ENCODE measurements at regions of chr1 and their contacts with region 1.

Region 1: DNA sequence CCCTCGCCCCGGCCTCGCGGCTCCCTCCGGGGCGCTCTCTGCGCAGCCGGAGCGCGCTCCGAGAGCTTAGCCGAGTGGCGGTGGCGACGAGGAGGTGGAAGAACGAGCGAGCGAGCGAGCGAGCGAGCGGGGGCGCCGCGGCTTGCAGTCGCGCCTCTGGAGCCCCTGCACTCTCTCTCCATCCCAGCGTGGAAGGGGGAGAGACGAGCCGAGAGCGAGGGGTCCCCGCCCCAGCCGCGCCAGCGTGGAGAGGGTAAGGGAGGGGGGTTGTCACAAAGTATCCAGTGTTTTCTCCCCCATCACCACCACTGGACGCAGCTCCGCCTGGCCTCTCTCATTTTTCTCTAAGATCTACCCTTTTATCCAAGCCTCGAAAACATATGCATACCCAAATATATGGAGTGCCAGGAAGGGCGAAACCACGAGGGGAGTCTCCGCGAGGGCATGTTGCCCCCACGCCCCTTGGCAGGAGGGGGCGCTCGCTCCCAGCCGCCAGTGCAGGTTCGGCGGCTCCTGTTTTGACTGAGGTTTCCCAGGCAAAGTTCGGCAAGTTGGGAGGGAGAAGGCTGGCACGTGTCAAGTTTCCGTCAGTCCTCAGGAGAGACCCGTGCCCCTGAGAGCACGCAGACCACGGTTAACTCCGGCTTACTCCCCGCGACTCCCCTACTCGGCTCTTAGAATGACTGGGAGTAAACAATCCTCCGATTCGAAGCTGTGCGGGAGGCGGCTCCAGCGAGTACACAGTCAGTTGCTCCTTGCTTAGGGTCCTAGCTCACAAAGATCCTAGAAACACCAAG is 569 bp upstream of the DAB1 start:
- DNase-seq: peak; percentile 28 to 73 (median 50)
- ATAC-seq: peak; percentile 33 to 78 (median 72)
- H3K4me3 ChIP-seq: peak overlapping the region; percentile 26 to 60 (median 53)
- H3K27ac ChIP-seq: peak overlapping the region in 7 of 12 donors; percentile 11 to 57 (median 45)
- H3K4me1 ChIP-seq: peaks cover 0 to 28% (median 1%) of the 10 kb centered on the region in 12 donors
- H3K27me3 ChIP-seq: peaks cover 0 to 57% (median 14%) of the 10 kb centered on the region in 9 donors
- CTCF ChIP-seq: peak; percentile 37 to 79 (median 64)
- POLR2A ChIP-seq: no peak

Region 2: GRCh38 chr1:57623039-57623790 is 198.8 kb after region 1 on chr1:
- intact Hi-C with region 1: loop called in 1 of 10 experiments (anchors 10 kb)
- DNase-seq: peak; percentile 41 to 84 (median 65)
- ATAC-seq: peak in 1 of 4 donors; percentile 95
- H3K4me3 ChIP-seq: no peak overlapping the region
- H3K27ac ChIP-seq: peak overlapping the region in 2 of 12 donors; percentile 28 to 51
- H3K4me1 ChIP-seq: peaks cover 0 to 18% (median 0%) of the 10 kb centered on the region in 12 donors
- H3K27me3 ChIP-seq: no peaks in the 10 kb centered on the region
- CTCF ChIP-seq: peak in 1 of 12 donors; percentile 20
- POLR2A ChIP-seq: no peak

Region 3: GRCh38 chr1:58047265-58047858 is 622.9 kb after region 1 on chr1:
- intact Hi-C with region 1: loop called in 7 of 10 experiments (anchors 5 to 10 kb)
- DNase-seq: no peak
- ATAC-seq: peak in 1 of 4 donors; percentile 61
- H3K4me3 ChIP-seq: no peak overlapping the region
- H3K27ac ChIP-seq: no peak overlapping the region
- H3K4me1 ChIP-seq: no peaks in the 10 kb centered on the region
- H3K27me3 ChIP-seq: no peaks in the 10 kb centered on the region
- CTCF ChIP-seq: peak; percentile 49 to 77 (median 62)
- POLR2A ChIP-seq: no peak

Region 4: GRCh38 chr1:58162952-58163550 is 738.6 kb after region 1 on chr1:
- intact Hi-C with region 1: loop called in 5 of 10 experiments (anchors 5 to 10 kb)
- DNase-seq: peak in 4 of 5 donors; percentile 64 to 77 (median 64)
- ATAC-seq: peak; percentile 71 to 95 (median 91)
- H3K4me3 ChIP-seq: no peak overlapping the region
- H3K27ac ChIP-seq: peak overlapping the region in 2 of 12 donors; percentile 25 to 46
- H3K4me1 ChIP-seq: peaks cover 0 to 6% (median 1%) of the 10 kb centered on the region in 12 donors
- H3K27me3 ChIP-seq: no peaks in the 10 kb centered on the region
- CTCF ChIP-seq: peak; percentile 77 to 92 (median 86)
- POLR2A ChIP-seq: no peak